Esophagus muscularis mucosa (tissue), 4 donors: ENCODE measurements at regions of chr4 and their contacts with region 1.

Region 1: DNA sequence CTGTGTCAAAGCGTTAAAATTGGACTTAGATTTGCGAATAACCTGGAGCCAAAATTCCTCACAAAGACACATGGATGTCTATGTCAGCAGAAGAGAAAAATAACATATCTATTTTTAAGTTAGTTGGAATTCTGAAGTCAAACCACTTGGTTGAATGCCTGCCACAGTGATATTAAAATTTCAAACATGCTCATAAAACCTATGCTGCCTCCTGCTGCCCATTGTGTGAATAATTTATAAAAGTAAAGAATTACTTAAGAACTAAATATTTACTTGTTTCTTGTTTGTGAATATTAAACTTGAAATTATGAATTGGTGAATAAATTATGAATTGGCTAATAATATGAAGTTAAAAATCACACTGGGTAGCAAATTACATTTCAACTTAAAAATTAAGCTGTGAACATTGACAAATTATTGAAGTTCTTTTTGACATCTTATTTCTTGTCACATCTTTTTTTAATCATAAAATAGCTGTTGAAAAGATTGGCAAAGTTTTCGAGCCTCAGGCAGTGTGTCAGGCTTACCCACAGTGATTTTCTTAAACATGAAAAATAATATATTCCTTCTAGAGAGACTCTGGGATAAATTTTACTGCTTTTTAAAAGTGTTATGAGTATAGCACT is 35.4 kb downstream of the FABP2 start:
- DNase-seq: no peak
- H3K4me3 ChIP-seq: no peak overlapping the region
- H3K27ac ChIP-seq: peak overlapping the region in 1 of 4 donors; percentile 1
- H3K4me1 ChIP-seq: peaks cover 31 to 51% (median 36%) of the 10 kb centered on the region in 4 donors
- H3K27me3 ChIP-seq: no peaks in the 10 kb centered on the region
- CTCF ChIP-seq: peak; percentile 61 to 73 (median 63)
- EP300 ChIP-seq: no peak
- POLR2A ChIP-seq: no peak

Region 2: DNA sequence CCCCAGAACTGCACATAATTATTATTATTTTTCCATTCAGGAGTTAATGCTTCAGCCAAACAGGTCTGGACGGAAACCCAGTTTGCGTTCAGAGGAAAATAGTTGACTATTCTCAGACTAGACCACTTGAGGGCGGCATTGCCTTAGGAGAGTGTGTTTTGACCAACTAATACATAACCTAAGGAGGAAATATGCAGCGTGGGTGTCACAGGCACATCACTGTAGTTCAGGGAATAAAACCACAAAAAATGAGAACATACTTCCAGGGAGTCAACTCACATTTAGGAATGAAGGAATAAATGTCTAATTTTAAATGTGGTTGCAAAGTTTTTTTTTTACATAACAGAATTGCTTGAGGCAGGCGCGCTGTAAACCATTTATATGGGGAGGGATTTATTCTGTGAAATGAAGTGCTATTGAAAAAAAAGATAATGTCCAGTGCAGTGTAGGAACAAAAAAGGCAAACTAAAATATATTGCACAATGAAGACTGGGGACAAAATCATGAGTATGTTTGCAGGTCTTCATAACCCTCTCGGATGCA is 304.6 kb before region 1 on chr4:
- intact Hi-C with region 1: loop called (anchors 2 kb)
- DNase-seq: no peak
- H3K4me3 ChIP-seq: peak overlapping the region; percentile 14 to 34 (median 22)
- H3K27ac ChIP-seq: peak overlapping the region; percentile 85 to 91 (median 90)
- H3K4me1 ChIP-seq: peaks cover 45 to 99% (median 92%) of the 10 kb centered on the region in 4 donors
- H3K27me3 ChIP-seq: no peaks in the 10 kb centered on the region
- CTCF ChIP-seq: peak; percentile 77 to 89 (median 78)
- EP300 ChIP-seq: no peak
- POLR2A ChIP-seq: no peak